ENCODE measurements at regions of chr15 and their contacts with region 1.

Region 1: DNA sequence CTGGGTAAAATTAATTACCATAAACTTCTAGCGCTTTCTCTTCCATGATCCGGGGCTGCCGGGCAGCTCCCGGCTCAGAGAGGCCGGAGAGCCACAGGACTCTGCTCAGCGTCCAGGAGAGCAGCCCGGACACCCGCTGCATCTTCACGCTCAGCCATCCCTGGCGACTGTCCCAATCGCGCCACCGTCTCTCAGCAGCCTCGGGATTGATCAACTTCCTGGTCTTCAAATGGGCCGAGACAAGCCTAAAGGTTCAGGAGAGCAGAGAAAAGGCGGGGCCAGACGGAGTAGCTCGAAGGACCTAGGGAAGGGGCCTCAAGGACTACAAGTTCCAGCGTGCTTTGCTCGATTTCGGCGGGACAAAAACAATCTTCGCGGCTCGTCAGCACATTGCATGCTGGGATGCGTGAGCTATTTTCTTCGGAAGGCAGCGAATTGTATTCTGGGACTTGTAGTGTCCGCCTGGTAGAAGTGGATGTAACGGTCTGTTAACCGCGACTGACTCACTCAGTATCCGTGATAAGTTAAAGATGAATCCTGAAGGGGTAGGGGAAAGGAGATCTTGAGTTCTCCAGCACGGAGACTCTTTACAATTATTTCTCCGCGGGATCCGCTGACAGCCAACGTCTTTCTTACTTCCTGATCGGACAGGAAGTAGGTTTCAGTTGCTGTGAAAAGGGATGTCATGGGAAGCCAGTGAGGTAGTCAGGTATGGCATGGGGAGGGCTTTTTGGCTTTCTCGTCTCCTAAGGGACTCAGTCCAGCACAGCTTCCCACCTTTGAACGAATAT is at the start of gene CIAO2A:
- DNase-seq: peak; percentile 66 to 93 (median 87)
- ATAC-seq: peak; percentile 80
- H3K4me3 ChIP-seq: peak within 1 kb of the TSS; percentile 87
- H3K4me3 Mint-ChIP-seq: peak within 1 kb of the TSS; percentile 92 to 100 (median 98)
- H3K27ac ChIP-seq: peak within 1 kb of the TSS; percentile 88
- H3K27ac Mint-ChIP-seq: peak within 1 kb of the TSS; percentile 98 to 100 (median 99)
- H3K4me1 ChIP-seq: peaks cover 41 to 48% of the 10 kb centered on the region in 2 donors
- H3K4me1 Mint-ChIP-seq: peaks cover 50 to 86% (median 81%) of the 10 kb centered on the region in 7 donors
- H3K27me3 ChIP-seq: no peaks in the 10 kb centered on the region
- H3K27me3 Mint-ChIP-seq: no peaks in the 10 kb centered on the region
- total RNA-seq, gene CIAO2A: 19.2 to 66.8 (median 28.0) TPM

Region 2: DNA sequence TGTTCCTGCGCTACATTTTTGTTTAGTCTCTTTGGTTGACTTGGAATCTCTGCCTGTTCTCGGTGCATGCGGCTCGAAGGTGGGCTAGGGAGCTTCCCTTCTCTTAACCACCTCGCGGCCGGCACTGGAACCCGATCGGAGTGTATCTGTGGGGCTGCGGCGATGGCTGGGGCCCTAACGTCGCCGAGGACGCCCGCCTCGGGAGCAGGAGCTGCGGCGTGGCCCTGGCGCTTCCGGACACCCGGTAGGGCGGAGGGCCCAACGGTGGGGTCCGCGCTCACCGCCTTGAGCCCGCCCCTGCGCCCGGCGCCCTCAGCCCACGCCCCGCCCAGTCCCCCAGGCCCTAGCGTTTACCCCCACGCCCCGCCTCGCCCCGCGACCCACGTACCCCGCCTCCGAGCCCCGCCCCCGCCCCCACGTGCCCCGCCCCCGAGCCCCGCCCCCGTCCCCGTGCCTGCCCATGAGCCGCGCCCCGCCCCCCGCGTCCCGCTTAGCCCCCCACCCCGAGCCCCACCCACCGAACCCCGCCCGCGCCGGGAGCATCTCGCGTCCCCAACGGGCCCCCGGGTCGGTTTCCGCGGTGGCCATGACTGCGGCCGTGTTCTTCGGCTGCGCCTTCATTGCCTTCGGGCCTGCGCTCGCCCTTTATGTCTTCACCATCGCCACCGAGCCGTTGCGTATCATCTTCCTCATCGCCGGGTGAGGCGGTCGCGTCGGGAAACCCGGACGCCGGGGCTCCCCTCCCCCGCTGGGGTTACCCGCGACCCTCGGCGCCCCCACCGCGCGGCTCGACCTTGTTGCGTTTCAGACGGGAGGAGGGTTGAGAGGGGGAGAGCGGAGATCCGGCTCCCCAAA is 816.6 kb before region 1 on chr15 and contains the start of gene APH1B:
- CTCF ChIA-PET with region 1: no interaction called
- POLR2A ChIA-PET with region 1: no interaction called
- intact Hi-C with region 1: loop called in 1 of 2 experiments (anchors 1 kb)
- DNase-seq: peak; percentile 62 to 80 (median 74)
- ATAC-seq: peak; percentile 92
- H3K4me3 ChIP-seq: peak within 1 kb of the TSS; percentile 71
- H3K4me3 Mint-ChIP-seq: peak within 1 kb of the TSS; percentile 78 to 93 (median 89)
- H3K27ac ChIP-seq: peak within 1 kb of the TSS; percentile 96
- H3K27ac Mint-ChIP-seq: peak within 1 kb of the TSS; percentile 75 to 98 (median 86)
- H3K4me1 ChIP-seq: peaks cover 10 to 21% of the 10 kb centered on the region in 2 donors
- H3K4me1 Mint-ChIP-seq: peaks cover 23 to 49% (median 46%) of the 10 kb centered on the region in 7 donors
- H3K27me3 ChIP-seq: no peaks in the 10 kb centered on the region
- H3K27me3 Mint-ChIP-seq: no peaks in the 10 kb centered on the region
- total RNA-seq, gene APH1B: 9.9 to 29.9 (median 17.6) TPM

Region 3: GRCh38 chr15:63668601-63669000 is 425.2 kb before region 1 on chr15:
- CTCF ChIA-PET with region 1: no interaction called
- POLR2A ChIA-PET with region 1: interaction called, 4 read pairs
- intact Hi-C with region 1: loop called in 1 of 2 experiments (anchors 2 kb)
- DNase-seq: peak in 6 of 9 donors; percentile 22 to 63 (median 52)
- ATAC-seq: peak; percentile 83
- H3K4me3 ChIP-seq: peak overlapping the region; percentile 36
- H3K4me3 Mint-ChIP-seq: peak overlapping the region; percentile 31 to 82 (median 78)
- H3K27ac ChIP-seq: peak overlapping the region; percentile 52
- H3K27ac Mint-ChIP-seq: peak overlapping the region; percentile 89 to 96 (median 92)
- H3K4me1 ChIP-seq: peaks cover 17 to 25% of the 10 kb centered on the region in 2 donors
- H3K4me1 Mint-ChIP-seq: peaks cover 22 to 56% (median 50%) of the 10 kb centered on the region in 7 donors
- H3K27me3 ChIP-seq: no peaks in the 10 kb centered on the region
- H3K27me3 Mint-ChIP-seq: no peaks in the 10 kb centered on the region

Region 4: DNA sequence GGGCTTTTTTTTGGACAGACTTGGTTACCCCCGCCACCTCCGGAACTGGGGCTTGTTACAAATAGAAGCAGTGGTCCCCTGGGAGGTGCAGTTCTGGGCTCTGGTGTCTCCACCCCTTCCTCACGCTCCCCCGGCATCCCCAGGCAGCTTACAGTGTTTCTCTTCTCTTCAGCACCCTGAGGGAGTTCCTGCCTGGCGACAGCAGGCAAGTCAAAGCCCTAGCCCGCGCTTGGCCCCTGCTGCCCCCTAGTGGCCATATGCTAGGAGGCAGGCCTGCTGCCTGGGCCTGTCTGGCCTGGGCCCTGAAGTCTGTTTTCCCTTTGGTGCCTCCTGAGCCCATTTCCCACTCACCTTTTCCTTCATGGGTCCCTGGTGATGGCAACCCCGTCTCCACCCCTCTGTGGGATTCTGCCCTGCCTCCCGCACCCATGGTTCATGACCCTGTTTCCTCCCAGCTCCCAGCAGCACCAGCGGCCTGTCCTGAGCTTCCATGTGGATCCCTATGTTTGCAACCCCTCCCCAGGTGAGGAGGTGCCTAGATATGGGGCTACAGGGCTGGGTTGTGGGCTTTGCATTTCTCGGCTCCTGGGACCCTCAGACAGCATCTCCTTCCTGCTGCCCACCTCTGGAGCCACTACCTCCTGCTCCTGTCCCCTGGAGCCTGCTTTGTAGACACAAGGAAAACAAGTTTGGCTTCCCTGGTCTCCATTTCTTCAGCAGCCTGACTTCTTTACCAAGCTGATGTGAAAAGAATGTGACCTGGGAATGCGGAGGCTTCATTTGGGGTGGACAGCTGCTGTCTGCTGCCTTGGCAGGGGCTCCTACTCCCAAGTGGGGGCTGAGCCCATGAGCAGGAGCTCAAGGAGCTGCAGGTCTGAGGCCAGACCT is 59.9 kb after region 1 on chr15:
- CTCF ChIA-PET with region 1: no interaction called
- POLR2A ChIA-PET with region 1: interaction called, 4 read pairs
- intact Hi-C with region 1: loop called (anchors 1 to 2 kb)
- DNase-seq: peak; percentile 77 to 96 (median 88)
- ATAC-seq: peak; percentile 97
- H3K4me3 ChIP-seq: peak overlapping the region; percentile 34
- H3K4me3 Mint-ChIP-seq: peak overlapping the region; percentile 60 to 85 (median 79)
- H3K27ac ChIP-seq: peak overlapping the region; percentile 25
- H3K27ac Mint-ChIP-seq: peak overlapping the region in 6 of 9 donors; percentile 14 to 74 (median 31)
- H3K4me1 ChIP-seq: peaks cover 10 to 21% of the 10 kb centered on the region in 2 donors
- H3K4me1 Mint-ChIP-seq: peaks cover 30 to 48% (median 39%) of the 10 kb centered on the region in 7 donors
- H3K27me3 ChIP-seq: peaks cover 0 to 4% of the 10 kb centered on the region in 2 donors
- H3K27me3 Mint-ChIP-seq: peaks cover 0 to 16% (median 8%) of the 10 kb centered on the region in 5 donors

Region 5: GRCh38 chr15:64387562-64388168 is 293.8 kb after region 1 on chr15 and contains the start of gene TRIP4:
- CTCF ChIA-PET with region 1: interaction called, 3 read pairs
- POLR2A ChIA-PET with region 1: interaction called, 7 read pairs
- intact Hi-C with region 1: loop called (anchors 2 to 5 kb)
- DNase-seq: peak; percentile 90 to 97 (median 96)
- ATAC-seq: peak; percentile 100
- H3K4me3 ChIP-seq: peak within 1 kb of the TSS; percentile 97
- H3K4me3 Mint-ChIP-seq: peak within 1 kb of the TSS; percentile 95 to 99 (median 97)
- H3K27ac ChIP-seq: peak within 1 kb of the TSS; percentile 64
- H3K27ac Mint-ChIP-seq: peak within 1 kb of the TSS; percentile 84 to 99 (median 92)
- H3K4me1 ChIP-seq: peaks cover 8 to 10% of the 10 kb centered on the region in 2 donors
- H3K4me1 Mint-ChIP-seq: peaks cover 17 to 24% (median 19%) of the 10 kb centered on the region in 7 donors
- H3K27me3 ChIP-seq: no peaks in the 10 kb centered on the region
- H3K27me3 Mint-ChIP-seq: no peaks in the 10 kb centered on the region
- total RNA-seq, gene TRIP4: 16.5 to 29.3 (median 25.4) TPM

Region 6: GRCh38 chr15:64893481-64894394 is 799.9 kb after region 1 on chr15:
- CTCF ChIA-PET with region 1: no interaction called
- POLR2A ChIA-PET with region 1: interaction called, 3 read pairs
- intact Hi-C with region 1: loop called (anchors 10 kb)
- DNase-seq: peak; percentile 78 to 97 (median 94)
- ATAC-seq: peak; percentile 82
- H3K4me3 ChIP-seq: peak overlapping the region; percentile 74
- H3K4me3 Mint-ChIP-seq: peak overlapping the region; percentile 77 to 94 (median 90)
- H3K27ac ChIP-seq: peak overlapping the region; percentile 84
- H3K27ac Mint-ChIP-seq: peak overlapping the region; percentile 90 to 100 (median 98)
- H3K4me1 ChIP-seq: peaks cover 52 to 53% of the 10 kb centered on the region in 2 donors
- H3K4me1 Mint-ChIP-seq: peaks cover 41 to 76% (median 63%) of the 10 kb centered on the region in 7 donors
- H3K27me3 ChIP-seq: no peaks in the 10 kb centered on the region
- H3K27me3 Mint-ChIP-seq: no peaks in the 10 kb centered on the region